ENCODE measurements at regions of chr14 and their contacts with region 1.

Region 1: GRCh38 chr14:64562431-64562830 is 12.7 kb downstream of the PPP1R36 start:
- DNase-seq: no peak
- H3K4me3 ChIP-seq: no peak overlapping the region
- H3K27ac ChIP-seq: no peak overlapping the region
- H3K4me1 ChIP-seq: no peaks in the 10 kb centered on the region
- H3K27me3 ChIP-seq: no peaks in the 10 kb centered on the region
- CTCF ChIP-seq: no peak

Region 2: GRCh38 chr14:64641756-64642155 is 79.3 kb after region 1 on chr14:
- CTCF ChIA-PET with region 1: no interaction called
- dilution Hi-C with region 1: loop called (anchors 5 kb)
- in situ Hi-C with region 1: no loop called
- intact Hi-C with region 1: no loop called
- DNase-seq: no peak
- H3K4me3 ChIP-seq: no peak overlapping the region
- H3K27ac ChIP-seq: no peak overlapping the region
- H3K4me1 ChIP-seq: peaks cover 16% of the 10 kb centered on the region
- H3K27me3 ChIP-seq: no peaks in the 10 kb centered on the region
- CTCF ChIP-seq: no peak

Measured in mammary epithelial cell (primary cell).